GM12878 (cell line): ENCODE measurements at regions of chr10 and their contacts with region 1.

Region 1: GRCh38 chr10:51389415-51390321 is 309.7 kb downstream of the CSTF2T start:
- DNase-seq: peak; percentile 2
- ATAC-seq: peak; percentile 96
- H3K4me3 ChIP-seq: no peak overlapping the region
- H3K27ac ChIP-seq: no peak overlapping the region
- H3K4me1 ChIP-seq: no peaks in the 10 kb centered on the region
- H3K27me3 ChIP-seq: no peaks in the 10 kb centered on the region
- CTCF ChIP-seq: peak; percentile 86 to 89 (median 87)
- EP300 ChIP-seq: no peak
- POLR2A ChIP-seq: no peak
- RAD21 ChIP-seq: peak; percentile 85

Region 2: DNA sequence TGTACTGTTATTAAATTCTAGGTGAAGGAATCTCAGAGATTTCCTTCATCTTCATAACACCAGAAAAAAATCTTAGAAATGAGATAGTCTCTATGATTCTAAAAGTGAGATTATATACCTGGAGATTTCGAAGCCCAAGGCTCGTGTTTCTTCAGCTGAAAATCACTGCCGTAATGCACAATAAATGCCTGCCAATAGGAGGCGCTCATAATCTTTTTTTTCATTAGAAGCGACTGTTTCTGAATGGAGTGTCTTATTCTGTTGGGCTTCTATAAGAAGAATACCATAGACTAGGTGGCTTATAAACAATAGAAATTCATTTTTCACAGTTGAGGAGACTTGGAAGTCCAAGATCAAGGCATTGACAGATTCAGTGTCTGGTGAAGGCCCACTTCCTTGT is 20.7 kb before region 1 on chr10:
- CTCF ChIA-PET with region 1: interaction called, 13 read pairs
- POLR2A ChIA-PET with region 1: no interaction called
- RAD21 ChIA-PET with region 1: interaction called, 3 read pairs
- SMC1A ChIA-PET with region 1: interaction called, 4 read pairs
- in situ Hi-C with region 1: no loop called
- intact Hi-C with region 1: no loop called
- DNase-seq: no peak
- ATAC-seq: no peak
- H3K4me3 ChIP-seq: no peak overlapping the region
- H3K27ac ChIP-seq: no peak overlapping the region
- H3K4me1 ChIP-seq: no peaks in the 10 kb centered on the region
- H3K27me3 ChIP-seq: no peaks in the 10 kb centered on the region
- CTCF ChIP-seq: peak; percentile 17 to 49 (median 17); a peak in 4 of 6 replicates
- EP300 ChIP-seq: no peak
- POLR2A ChIP-seq: no peak
- RAD21 ChIP-seq: peak; percentile 38; the same call in 1 of the 2 replicates

Region 3: DNA sequence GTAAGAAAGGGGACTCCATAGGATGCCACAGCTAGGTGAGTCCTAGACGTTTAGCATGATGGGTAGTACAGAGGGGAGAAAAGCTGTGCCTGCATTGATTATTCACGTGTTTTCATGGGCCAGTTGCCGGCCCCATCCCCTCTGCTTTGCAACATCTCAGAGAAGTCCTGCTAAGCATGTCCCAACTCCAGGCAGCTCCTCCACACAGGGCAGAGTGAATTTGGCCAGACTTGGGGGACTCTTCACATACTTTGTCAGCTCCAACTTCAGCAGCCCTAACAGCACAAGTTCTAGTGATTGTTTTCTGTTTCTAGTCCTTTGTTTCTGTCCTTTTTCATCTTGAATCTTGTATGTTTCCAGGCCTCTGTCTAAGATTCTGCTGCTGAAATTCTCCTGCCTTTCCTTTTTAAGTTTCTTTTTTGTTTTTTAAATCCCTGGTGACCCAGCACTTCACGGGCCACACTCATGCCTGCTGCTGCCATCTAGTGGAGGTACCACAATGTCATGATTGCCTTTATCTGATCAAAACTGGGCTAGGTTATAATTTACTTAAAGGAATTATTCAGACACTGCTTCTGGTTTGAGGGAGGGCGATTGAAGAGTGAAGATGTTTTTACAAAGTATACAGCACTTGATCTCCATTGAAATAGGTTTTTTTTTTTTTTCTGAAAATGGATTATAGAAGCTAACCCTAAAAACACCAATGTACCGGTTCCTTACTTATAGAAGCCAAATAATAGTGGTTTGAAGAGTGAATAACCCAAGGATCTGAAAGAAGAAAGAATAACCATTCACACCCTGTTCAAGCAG is 32.8 kb after region 1 on chr10:
- CTCF ChIA-PET with region 1: interaction called, 22 read pairs
- POLR2A ChIA-PET with region 1: no interaction called
- RAD21 ChIA-PET with region 1: interaction called, 5 read pairs
- SMC1A ChIA-PET with region 1: interaction called, 6 read pairs
- in situ Hi-C with region 1: no loop called
- intact Hi-C with region 1: no loop called
- DNase-seq: peak; percentile 8
- ATAC-seq: peak; percentile 90
- H3K4me3 ChIP-seq: no peak overlapping the region
- H3K27ac ChIP-seq: no peak overlapping the region
- H3K4me1 ChIP-seq: no peaks in the 10 kb centered on the region
- H3K27me3 ChIP-seq: no peaks in the 10 kb centered on the region
- CTCF ChIP-seq: peak; percentile 59 to 71 (median 67)
- EP300 ChIP-seq: no peak
- POLR2A ChIP-seq: no peak
- RAD21 ChIP-seq: peak; percentile 55

Region 4: GRCh38 chr10:51960494-51960895 is 570.8 kb after region 1 on chr10:
- CTCF ChIA-PET with region 1: interaction called, 58 read pairs
- POLR2A ChIA-PET with region 1: no interaction called
- RAD21 ChIA-PET with region 1: interaction called, 14 read pairs
- SMC1A ChIA-PET with region 1: interaction called, 29 read pairs
- in situ Hi-C with region 1: loop called (anchors 10 kb)
- intact Hi-C with region 1: loop called (anchors 1 kb)
- DNase-seq: no peak
- ATAC-seq: peak; percentile 71
- H3K4me3 ChIP-seq: no peak overlapping the region
- H3K27ac ChIP-seq: no peak overlapping the region
- H3K4me1 ChIP-seq: no peaks in the 10 kb centered on the region
- H3K27me3 ChIP-seq: no peaks in the 10 kb centered on the region
- CTCF ChIP-seq: peak; percentile 38 to 50 (median 49); a peak in 5 of 6 replicates
- EP300 ChIP-seq: no peak
- POLR2A ChIP-seq: no peak
- RAD21 ChIP-seq: peak; percentile 79

Region 5: GRCh38 chr10:52215745-52216361 is 826.2 kb after region 1 on chr10:
- CTCF ChIA-PET with region 1: interaction called, 31 read pairs
- POLR2A ChIA-PET with region 1: no interaction called
- RAD21 ChIA-PET with region 1: interaction called, 8 read pairs
- SMC1A ChIA-PET with region 1: interaction called, 17 read pairs
- in situ Hi-C with region 1: loop called (anchors 10 kb)
- intact Hi-C with region 1: loop called (anchors 1 kb)
- DNase-seq: peak; percentile 32
- ATAC-seq: peak; percentile 91
- H3K4me3 ChIP-seq: no peak overlapping the region
- H3K27ac ChIP-seq: no peak overlapping the region
- H3K4me1 ChIP-seq: peaks cover 8% of the 10 kb centered on the region
- H3K27me3 ChIP-seq: no peaks in the 10 kb centered on the region
- CTCF ChIP-seq: peak; percentile 67 to 76 (median 70)
- EP300 ChIP-seq: no peak
- POLR2A ChIP-seq: no peak
- RAD21 ChIP-seq: peak; percentile 93